ENCODE measurements at regions of chr7 and their contacts with region 1.

Region 1: GRCh38 chr7:25259587-25260243 is 31.4 kb upstream of the NPVF start:
- DNase-seq: peak; percentile 80
- ATAC-seq: peak; percentile 84
- H3K4me3 Mint-ChIP-seq: no peak overlapping the region
- H3K27ac Mint-ChIP-seq: no peak overlapping the region
- H3K4me1 Mint-ChIP-seq: peaks cover 24% of the 10 kb centered on the region
- H3K27me3 Mint-ChIP-seq: peaks cover 12% of the 10 kb centered on the region

Region 2: GRCh38 chr7:25389489-25390106 is 129.9 kb after region 1 on chr7:
- CTCF ChIA-PET with region 1: interaction called, 92 read pairs
- POLR2A ChIA-PET with region 1: no interaction called
- DNase-seq: no peak
- ATAC-seq: no peak
- H3K4me3 Mint-ChIP-seq: no peak overlapping the region
- H3K27ac Mint-ChIP-seq: no peak overlapping the region
- H3K4me1 Mint-ChIP-seq: no peaks in the 10 kb centered on the region
- H3K27me3 Mint-ChIP-seq: peaks cover 20% of the 10 kb centered on the region

Region 3: GRCh38 chr7:25578991-25579777 is 319.5 kb after region 1 on chr7:
- CTCF ChIA-PET with region 1: interaction called, 14 read pairs
- POLR2A ChIA-PET with region 1: no interaction called
- DNase-seq: no peak
- ATAC-seq: no peak
- H3K4me3 Mint-ChIP-seq: no peak overlapping the region
- H3K27ac Mint-ChIP-seq: no peak overlapping the region
- H3K4me1 Mint-ChIP-seq: no peaks in the 10 kb centered on the region
- H3K27me3 Mint-ChIP-seq: peaks cover 11% of the 10 kb centered on the region

Region 4: DNA sequence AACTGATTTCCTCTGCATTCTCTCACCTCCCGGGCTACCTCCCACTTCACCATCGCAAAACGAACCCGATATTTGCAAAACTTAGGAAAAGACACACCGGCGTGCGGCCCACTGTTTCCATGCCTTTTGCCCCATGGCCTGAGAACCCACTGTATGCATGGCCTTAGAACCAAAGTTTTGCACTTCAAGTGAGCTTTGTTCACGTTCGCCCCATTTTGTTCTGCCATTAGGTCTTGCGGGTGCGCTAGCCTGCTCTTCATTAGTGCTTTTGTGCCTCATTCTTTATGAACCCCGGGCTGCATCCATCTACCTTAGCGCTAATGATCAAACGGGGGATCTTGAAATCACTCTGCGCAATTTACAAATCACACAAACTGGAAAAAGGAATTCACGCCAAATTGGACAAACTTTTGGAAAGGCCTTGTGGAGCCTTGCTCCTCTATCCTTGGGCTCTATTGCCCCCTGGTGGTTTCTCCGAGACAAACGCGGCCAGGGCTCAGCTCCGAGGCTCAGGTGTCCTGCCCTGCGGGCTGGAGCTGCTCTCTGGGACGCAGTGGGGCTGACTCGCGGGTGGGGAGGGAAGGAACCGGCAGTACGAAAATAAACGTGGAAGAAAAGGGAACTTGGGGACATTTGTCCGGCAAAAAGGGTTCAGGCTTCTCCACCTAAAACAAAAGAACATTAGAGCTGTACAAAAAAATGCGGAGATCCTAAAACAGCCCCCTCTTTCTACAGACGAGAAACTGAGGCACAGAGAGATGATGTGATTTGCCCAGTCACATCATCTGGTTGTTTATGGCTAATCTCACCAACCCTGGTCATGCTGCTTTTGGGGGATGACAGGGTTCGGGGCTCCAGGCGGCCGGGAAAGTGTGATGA is 591.9 kb after region 1 on chr7:
- CTCF ChIA-PET with region 1: interaction called, 18 read pairs
- POLR2A ChIA-PET with region 1: no interaction called
- DNase-seq: peak; percentile 73
- ATAC-seq: peak; percentile 78
- H3K4me3 Mint-ChIP-seq: peak overlapping the region; percentile 55
- H3K27ac Mint-ChIP-seq: peak overlapping the region; percentile 58
- H3K4me1 Mint-ChIP-seq: peaks cover 19% of the 10 kb centered on the region
- H3K27me3 Mint-ChIP-seq: peaks cover 59% of the 10 kb centered on the region